ENCODE measurements at regions of chr4 and their contacts with region 1.

Region 1: DNA sequence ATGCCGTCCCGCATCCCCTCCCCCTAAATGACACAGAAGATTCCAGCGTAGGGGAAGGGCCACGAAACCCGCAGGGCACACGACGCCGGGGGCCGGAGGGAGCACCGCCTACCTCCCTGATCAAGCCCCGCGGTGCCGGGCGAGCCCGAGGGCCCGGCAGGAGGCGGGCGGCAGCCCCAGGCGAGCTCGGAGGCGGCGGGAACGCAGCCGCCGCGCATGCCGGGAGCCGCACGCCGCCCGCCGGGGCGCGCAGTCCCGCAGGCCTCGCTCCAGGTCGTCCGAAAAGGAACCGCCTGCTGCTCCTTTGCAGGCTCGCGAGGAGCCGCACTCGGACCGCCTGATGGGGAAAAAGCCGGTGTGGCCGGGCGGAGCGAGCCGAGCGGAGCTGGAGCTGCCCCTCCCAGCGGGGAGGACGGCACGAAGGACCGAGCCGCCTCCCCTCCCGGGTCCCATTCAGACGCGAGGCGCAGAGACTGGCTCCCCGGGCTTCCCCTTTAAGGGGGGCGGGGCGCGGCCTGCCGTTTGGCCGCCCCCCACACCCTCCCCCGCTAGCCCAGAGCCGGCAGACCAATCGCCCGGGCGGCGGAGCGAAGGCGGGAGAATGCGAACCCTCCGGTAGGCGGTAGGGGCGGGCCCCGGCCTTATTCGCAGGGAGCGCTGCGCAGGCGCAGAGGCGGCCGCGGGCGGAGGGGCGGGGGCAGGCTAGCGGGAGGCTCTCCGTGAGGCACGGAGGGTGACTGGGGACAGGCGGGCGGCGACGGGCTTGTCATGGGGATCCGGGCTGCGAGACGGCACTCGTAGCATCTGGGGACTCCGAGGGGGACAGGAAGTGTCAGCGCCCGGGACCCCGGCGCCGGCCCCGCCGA is 561 bp upstream of the ING2 start:
- DNase-seq: peak; percentile 86 to 99
- H3K4me3 ChIP-seq: peak overlapping the region; percentile 63
- H3K27ac ChIP-seq: peak overlapping the region; percentile 63
- H3K4me1 ChIP-seq: peaks cover 11% of the 10 kb centered on the region
- H3K27me3 ChIP-seq: no peaks in the 10 kb centered on the region
- CTCF ChIP-seq: no peak

Region 2: GRCh38 chr4:183444214-183445066 is 59.9 kb before region 1 on chr4 and contains the start of gene CDKN2AIP:
- CTCF ChIA-PET with region 1: no interaction called
- POLR2A ChIA-PET with region 1: no interaction called
- intact Hi-C with region 1: loop called (anchors 2 kb)
- DNase-seq: peak; percentile 81 to 93
- H3K4me3 ChIP-seq: peak within 1 kb of the TSS; percentile 88
- H3K27ac ChIP-seq: peak within 1 kb of the TSS; percentile 93
- H3K4me1 ChIP-seq: peaks cover 12% of the 10 kb centered on the region; the same call in 1 of the 2 replicates
- H3K27me3 ChIP-seq: no peaks in the 10 kb centered on the region
- CTCF ChIP-seq: no peak
- total RNA-seq, gene CDKN2AIP: 7.7 and 8.7 TPM in 2 replicates

Region 3: DNA sequence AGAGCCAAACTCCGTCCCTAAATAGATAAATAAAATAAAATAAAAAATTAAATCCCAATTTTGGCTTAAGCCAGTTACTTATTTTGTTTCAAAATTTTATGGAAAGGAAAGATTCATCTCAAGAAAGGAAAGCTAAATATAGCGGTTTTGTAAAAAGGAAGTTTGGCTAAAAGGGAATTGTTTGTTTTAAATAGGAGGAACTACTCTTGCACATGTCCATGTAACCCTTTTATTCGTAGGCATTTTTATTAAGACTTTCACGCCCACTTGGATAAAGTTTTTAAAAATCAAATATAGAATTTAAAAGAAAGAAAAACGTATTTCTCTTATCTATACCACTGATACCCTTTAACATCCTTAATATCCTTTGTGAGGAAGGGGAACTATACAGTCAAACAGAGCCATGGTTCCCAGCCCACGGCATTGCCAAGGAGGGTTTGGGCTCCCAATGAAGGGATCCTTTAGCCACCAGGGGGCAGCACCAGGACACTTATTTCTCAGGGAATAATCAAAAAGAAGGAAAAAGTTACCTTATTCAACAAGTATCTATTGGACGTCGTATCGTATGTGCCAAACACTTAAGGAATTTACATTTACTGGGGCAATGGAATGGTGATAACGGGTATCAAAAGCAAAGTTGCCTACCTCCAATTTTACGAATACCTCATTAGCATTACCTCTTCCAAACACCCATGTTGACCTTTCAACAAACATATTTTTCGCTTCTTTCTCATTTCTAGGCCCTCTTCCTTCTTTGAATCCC is 32.2 kb before region 1 on chr4:
- CTCF ChIA-PET with region 1: no interaction called
- POLR2A ChIA-PET with region 1: no interaction called
- intact Hi-C with region 1: loop called (anchors 2 kb)
- DNase-seq: peak; percentile 46 to 72
- H3K4me3 ChIP-seq: no peak overlapping the region
- H3K27ac ChIP-seq: no peak overlapping the region
- H3K4me1 ChIP-seq: peaks cover 10% of the 10 kb centered on the region; the same call in 1 of the 2 replicates
- H3K27me3 ChIP-seq: no peaks in the 10 kb centered on the region
- CTCF ChIP-seq: peak; percentile 82

Region 4: DNA sequence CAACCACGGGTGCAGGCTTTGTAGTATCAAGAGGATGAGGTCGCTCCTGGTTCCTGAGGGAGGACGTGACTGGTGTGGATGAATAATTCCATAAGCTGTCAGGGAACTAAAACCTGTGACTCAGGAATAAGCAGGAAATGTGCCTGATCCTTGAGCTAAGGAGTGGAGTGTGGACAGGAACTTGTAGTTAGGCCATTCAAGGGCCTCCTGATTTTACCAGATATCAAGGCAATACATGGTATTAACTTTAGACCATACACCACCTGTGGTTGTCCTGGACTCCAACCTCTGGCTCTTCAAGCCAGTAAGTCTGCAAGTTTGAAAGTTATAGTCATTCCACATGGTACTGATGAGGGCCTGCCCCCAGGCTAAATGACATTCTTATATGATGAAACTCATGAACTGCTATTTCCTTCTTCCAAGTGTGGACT is 11.5 kb before region 1 on chr4:
- CTCF ChIA-PET with region 1: no interaction called
- POLR2A ChIA-PET with region 1: no interaction called
- intact Hi-C with region 1: loop called (anchors 1 kb)
- DNase-seq: peak; percentile 75 to 90
- H3K4me3 ChIP-seq: no peak overlapping the region
- H3K27ac ChIP-seq: peak overlapping the region; percentile 76
- H3K4me1 ChIP-seq: peaks cover 29% of the 10 kb centered on the region
- H3K27me3 ChIP-seq: no peaks in the 10 kb centered on the region
- CTCF ChIP-seq: no peak

Region 5: GRCh38 chr4:183636923-183637322 is 132.6 kb after region 1 on chr4:
- CTCF ChIA-PET with region 1: no interaction called
- POLR2A ChIA-PET with region 1: no interaction called
- intact Hi-C with region 1: loop called (anchors 5 kb)
- DNase-seq: peak; percentile 29 to 43
- H3K4me3 ChIP-seq: no peak overlapping the region
- H3K27ac ChIP-seq: peak overlapping the region; percentile 46
- H3K4me1 ChIP-seq: peaks cover 16% of the 10 kb centered on the region
- H3K27me3 ChIP-seq: no peaks in the 10 kb centered on the region
- CTCF ChIP-seq: no peak

Region 6: DNA sequence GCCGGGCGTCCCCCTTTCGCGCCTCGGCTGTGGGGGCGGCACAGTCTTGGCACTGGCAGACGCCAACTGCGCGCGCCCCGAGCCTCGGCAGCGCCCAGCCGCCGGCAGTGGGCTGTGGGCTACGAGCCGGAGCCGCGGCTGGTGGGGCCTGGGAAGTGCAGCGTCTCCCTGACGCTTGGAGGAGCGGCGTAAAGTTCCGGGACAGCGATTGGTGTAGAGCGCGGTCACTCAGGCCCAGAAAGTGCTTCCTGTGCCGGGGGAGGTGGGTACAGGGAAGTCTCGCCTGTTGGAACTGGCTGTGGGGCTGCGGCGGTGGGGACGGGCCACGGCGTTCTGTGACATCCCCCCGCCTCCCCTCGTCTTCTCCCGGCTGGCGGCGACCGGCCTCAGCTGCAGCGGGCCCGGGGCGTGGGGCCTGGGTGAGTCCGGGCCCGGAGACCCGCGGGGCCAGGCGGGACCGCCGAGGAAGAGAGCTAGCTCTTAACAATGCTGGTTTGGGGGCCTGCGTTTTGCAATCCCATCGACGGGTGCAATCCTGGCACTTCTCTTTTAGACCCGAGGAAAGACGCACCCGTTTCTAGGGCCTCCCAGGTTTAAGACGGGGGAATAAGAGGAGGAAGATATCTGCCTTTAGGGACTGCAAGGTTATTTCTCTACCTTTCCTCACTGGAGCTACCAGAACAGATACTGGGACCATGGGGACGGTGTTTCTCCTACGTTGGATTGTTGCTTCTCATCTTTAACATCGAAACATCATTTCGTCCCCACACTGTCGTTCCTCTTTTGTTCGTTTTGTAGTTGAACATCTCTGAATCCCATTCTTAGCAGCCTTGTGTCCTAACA is 155.0 kb after region 1 on chr4 and contains the starts of genes RWDD4 and TRAPPC11:
- CTCF ChIA-PET with region 1: no interaction called
- POLR2A ChIA-PET with region 1: no interaction called
- intact Hi-C with region 1: loop called (anchors 1 kb)
- DNase-seq: peak; percentile 89 to 96
- H3K4me3 ChIP-seq: peak within 1 kb of the TSS; percentile 92
- H3K27ac ChIP-seq: peak within 1 kb of the TSS; percentile 28
- H3K4me1 ChIP-seq: peaks cover 18% of the 10 kb centered on the region
- H3K27me3 ChIP-seq: no peaks in the 10 kb centered on the region
- CTCF ChIP-seq: no peak; the same call in 1 of the 2 replicates
- total RNA-seq, gene RWDD4: 16.8 and 21.5 TPM in 2 replicates
- total RNA-seq, gene TRAPPC11: 29.0 and 31.7 TPM in 2 replicates